ENCODE measurements at regions of chr9 and their contacts with region 1.

Region 1: DNA sequence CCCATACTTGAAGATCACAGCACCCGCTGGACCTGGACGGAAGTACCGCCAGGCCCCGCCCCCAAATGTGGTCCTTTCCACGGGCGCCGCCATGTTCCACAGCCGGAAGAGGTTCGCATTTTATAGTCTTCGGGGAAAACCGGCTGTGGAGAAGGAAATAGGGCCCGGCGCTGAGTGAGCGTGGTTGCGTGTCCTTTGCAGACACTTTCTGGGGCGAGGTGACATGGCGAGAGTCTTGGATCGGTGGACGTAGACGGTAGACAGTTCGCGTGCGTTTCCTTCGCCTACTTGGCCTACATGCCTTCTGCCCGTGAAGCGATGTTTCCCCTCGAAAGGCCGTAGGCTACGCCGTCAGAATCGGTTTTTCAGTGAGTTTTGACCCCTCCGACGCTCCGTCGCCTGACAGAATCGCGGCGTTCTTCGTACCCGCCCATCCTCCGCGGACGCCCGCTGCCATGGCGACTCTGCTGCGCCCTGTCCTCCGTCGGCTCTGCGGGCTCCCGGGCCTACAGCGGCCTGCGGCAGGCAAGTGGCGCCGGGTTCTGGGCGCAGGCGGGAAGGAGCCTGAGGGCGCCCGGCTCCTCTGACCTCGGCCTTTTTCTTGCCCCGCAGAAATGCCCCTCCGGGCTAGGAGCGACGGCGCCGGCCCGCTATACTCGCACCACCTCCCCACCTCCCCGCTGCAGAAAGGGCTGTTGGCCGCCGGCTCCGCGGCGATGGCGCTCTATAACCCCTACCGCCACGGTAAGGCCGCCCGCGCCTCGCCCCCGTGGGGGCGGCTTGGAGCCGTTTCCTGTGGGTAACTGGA is at the starts of genes COQ4 and TRUB2:
- DNase-seq: peak; percentile 96 to 97
- ATAC-seq: peak; percentile 96 to 99
- H3K4me3 ChIP-seq: peak within 1 kb of the TSS; percentile 74
- H3K27ac ChIP-seq: peak within 1 kb of the TSS; percentile 97 to 99
- H3K4me1 ChIP-seq: peaks cover 20% of the 10 kb centered on the region
- CTCF ChIP-seq: no peak
- EP300 ChIP-seq: no peak
- POLR2A ChIP-seq: peak; percentile 61
- RAD21 ChIP-seq: peak in 1 of 2 experiments; percentile 6; a peak in 2 of 5 replicates
- polyA plus RNA-seq, gene COQ4: 32.5 and 38.0 TPM in 2 replicates
- polyA plus RNA-seq, gene TRUB2: 29.0 and 43.4 TPM in 2 replicates

Region 2: GRCh38 chr9:128310461-128310860 is 12.1 kb before region 1 on chr9:
- CTCF ChIA-PET with region 1: interaction called, 11 read pairs
- POLR2A ChIA-PET with region 1: interaction called, 4 read pairs
- DNase-seq: no peak
- ATAC-seq: no peak
- H3K4me3 ChIP-seq: no peak overlapping the region
- H3K27ac ChIP-seq: peak overlapping the region in 1 of 2 experiments; percentile 20; a peak in 2 of 6 replicates
- H3K4me1 ChIP-seq: peaks cover 30% of the 10 kb centered on the region
- CTCF ChIP-seq: no peak
- EP300 ChIP-seq: no peak
- POLR2A ChIP-seq: no peak
- RAD21 ChIP-seq: no peak

Region 3: DNA sequence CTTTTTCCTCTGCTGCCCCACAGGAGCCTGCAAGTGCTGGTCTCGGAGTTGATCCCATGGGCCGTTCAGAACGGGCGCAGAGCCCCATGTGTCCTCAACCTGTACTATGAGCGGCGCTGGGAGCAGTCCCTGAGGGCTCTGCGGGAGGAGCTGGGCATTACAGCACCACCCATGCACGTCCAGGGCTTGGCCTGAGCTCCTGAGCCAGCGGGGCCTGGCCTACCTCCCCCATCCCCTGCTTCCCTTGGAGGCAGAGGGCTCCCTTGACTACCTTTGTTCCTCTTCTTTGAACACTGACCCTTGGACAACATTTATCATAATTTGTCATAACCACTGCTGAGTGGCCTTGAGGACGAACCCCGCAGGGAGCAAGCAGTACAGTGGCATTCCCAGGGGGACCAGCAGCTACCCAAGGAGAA is 10.9 kb after region 1 on chr9:
- CTCF ChIA-PET with region 1: interaction called, 15 read pairs
- POLR2A ChIA-PET with region 1: no interaction called
- DNase-seq: no peak
- ATAC-seq: no peak
- H3K4me3 ChIP-seq: no peak overlapping the region
- H3K27ac ChIP-seq: no peak overlapping the region
- H3K4me1 ChIP-seq: peaks cover 5% of the 10 kb centered on the region; the same call in 1 of the 3 replicates
- CTCF ChIP-seq: no peak
- EP300 ChIP-seq: no peak
- POLR2A ChIP-seq: no peak
- RAD21 ChIP-seq: no peak

Region 4: DNA sequence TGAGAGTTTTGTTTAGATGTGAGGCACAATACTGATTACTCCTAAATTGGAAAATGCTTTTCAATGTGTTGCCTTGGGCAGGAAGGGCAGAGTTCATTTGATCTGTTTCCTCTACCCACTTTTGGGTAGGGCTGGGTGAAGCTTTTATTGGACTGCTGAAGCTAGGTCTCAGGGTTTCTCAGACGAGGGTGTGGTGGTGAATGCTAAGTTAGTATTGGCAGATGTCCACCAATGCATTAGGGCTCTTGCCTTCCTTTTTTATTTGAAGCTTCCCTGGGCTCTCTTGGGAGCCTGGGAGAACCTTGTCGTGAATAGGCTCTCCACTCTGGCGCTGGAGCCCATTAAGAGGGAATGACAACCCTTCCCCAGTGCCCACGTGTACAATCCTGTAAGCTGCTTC is 252.9 kb after region 1 on chr9:
- CTCF ChIA-PET with region 1: no interaction called
- POLR2A ChIA-PET with region 1: no interaction called
- DNase-seq: no peak
- ATAC-seq: no peak
- H3K4me3 ChIP-seq: no peak overlapping the region
- H3K27ac ChIP-seq: no peak overlapping the region
- H3K4me1 ChIP-seq: no peaks in the 10 kb centered on the region
- CTCF ChIP-seq: no peak
- EP300 ChIP-seq: no peak
- POLR2A ChIP-seq: no peak
- RAD21 ChIP-seq: no peak